Activated CD8-positive, alpha-beta T cell treated with anti-CD3 and anti-CD28 coated beads for 36 hours (primary cell): ENCODE measurements at regions of chr11 and their contacts with region 1.

Region 1: DNA sequence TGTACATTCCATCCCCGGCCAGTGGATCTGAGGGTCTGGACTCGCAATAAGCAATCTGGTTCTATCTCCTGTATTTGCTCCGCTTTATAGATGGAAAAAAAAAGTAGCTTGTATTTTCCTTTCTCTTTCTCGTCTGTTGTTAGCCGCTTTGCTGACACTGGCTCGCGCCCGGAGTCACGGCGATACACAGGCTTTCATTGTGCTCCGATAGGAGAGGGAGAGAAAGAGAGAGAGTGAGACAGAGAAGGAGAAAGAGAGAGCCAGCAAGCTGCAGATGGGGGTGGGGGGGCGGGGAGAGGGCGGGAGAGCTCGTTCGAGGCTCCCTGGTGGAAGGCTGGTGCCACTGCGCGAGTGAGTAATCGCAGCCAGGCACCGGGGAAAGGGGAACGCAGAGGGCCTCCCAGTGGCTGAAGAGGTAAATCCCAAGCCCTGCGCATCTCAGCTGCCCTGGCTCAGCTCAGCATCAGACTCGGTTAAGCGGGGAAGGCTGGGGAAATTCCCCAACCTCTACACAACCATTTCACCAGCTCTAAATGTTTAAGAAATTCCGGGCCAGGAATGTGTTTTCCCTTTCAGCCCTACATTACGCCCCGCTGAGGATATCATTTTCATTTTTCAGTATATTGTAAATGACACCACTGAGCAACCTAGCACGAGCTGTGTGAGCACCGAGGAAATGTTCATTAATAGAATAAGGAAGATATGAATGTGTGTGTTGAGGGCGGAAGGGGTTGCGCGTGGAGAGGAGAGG is at the start of gene MAML2:
- DNase-seq: peak; percentile 96
- ATAC-seq: peak; percentile 84
- H3K4me3 Mint-ChIP-seq: peak within 1 kb of the TSS; percentile 86
- H3K27ac Mint-ChIP-seq: peak within 1 kb of the TSS; percentile 94
- H3K4me1 Mint-ChIP-seq: peaks cover 23% of the 10 kb centered on the region
- H3K27me3 Mint-ChIP-seq: no peaks in the 10 kb centered on the region
- CTCF ChIP-seq: peak; percentile 85
- total RNA-seq, gene MAML2: 11.8 to 12.5 TPM

Region 2: GRCh38 chr11:96012086-96012824 is 330.9 kb before region 1 on chr11:
- CTCF ChIA-PET with region 1: interaction called, 7 read pairs
- POLR2A ChIA-PET with region 1: interaction called, 6 read pairs
- intact Hi-C with region 1: loop called (anchors 5 kb)
- DNase-seq: peak; percentile 61
- ATAC-seq: peak; percentile 56
- H3K4me3 Mint-ChIP-seq: peak overlapping the region; percentile 45
- H3K27ac Mint-ChIP-seq: peak overlapping the region; percentile 90
- H3K4me1 Mint-ChIP-seq: peaks cover 58% of the 10 kb centered on the region
- H3K27me3 Mint-ChIP-seq: no peaks in the 10 kb centered on the region
- CTCF ChIP-seq: peak; percentile 55

Region 3: GRCh38 chr11:96188243-96189006 is 154.7 kb before region 1 on chr11:
- CTCF ChIA-PET with region 1: interaction called, 11 read pairs
- POLR2A ChIA-PET with region 1: interaction called, 12 read pairs
- intact Hi-C with region 1: loop called (anchors 2 kb)
- DNase-seq: peak; percentile 58
- ATAC-seq: peak; percentile 60
- H3K4me3 Mint-ChIP-seq: peak overlapping the region; percentile 43
- H3K27ac Mint-ChIP-seq: peak overlapping the region; percentile 86
- H3K4me1 Mint-ChIP-seq: peaks cover 81% of the 10 kb centered on the region
- H3K27me3 Mint-ChIP-seq: no peaks in the 10 kb centered on the region
- CTCF ChIP-seq: no peak

Region 4: DNA sequence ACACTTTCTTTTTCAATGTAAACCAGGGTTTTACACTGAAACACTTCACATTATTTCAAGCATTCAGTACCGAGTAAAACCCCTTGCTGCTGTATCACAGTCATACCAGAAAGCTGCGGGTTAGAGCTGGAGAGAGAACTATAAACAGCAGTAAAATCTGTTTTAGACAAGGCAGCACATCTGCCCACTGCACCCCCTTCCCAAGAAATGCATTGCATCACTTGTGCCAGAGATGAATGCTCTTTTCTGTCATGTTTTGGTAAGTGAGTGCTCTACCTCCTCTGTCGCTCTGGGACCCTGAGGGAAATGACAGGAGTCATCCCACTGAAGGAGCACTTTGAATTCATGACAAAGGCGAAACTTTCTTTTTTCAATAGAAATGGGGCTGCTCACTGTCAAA is 107.4 kb before region 1 on chr11:
- CTCF ChIA-PET with region 1: interaction called, 132 read pairs
- POLR2A ChIA-PET with region 1: interaction called, 11 read pairs
- intact Hi-C with region 1: no loop called
- DNase-seq: peak; percentile 83
- ATAC-seq: peak; percentile 98
- H3K4me3 Mint-ChIP-seq: peak overlapping the region; percentile 52
- H3K27ac Mint-ChIP-seq: peak overlapping the region; percentile 90
- H3K4me1 Mint-ChIP-seq: peaks cover 22% of the 10 kb centered on the region
- H3K27me3 Mint-ChIP-seq: no peaks in the 10 kb centered on the region
- CTCF ChIP-seq: no peak

Region 5: DNA sequence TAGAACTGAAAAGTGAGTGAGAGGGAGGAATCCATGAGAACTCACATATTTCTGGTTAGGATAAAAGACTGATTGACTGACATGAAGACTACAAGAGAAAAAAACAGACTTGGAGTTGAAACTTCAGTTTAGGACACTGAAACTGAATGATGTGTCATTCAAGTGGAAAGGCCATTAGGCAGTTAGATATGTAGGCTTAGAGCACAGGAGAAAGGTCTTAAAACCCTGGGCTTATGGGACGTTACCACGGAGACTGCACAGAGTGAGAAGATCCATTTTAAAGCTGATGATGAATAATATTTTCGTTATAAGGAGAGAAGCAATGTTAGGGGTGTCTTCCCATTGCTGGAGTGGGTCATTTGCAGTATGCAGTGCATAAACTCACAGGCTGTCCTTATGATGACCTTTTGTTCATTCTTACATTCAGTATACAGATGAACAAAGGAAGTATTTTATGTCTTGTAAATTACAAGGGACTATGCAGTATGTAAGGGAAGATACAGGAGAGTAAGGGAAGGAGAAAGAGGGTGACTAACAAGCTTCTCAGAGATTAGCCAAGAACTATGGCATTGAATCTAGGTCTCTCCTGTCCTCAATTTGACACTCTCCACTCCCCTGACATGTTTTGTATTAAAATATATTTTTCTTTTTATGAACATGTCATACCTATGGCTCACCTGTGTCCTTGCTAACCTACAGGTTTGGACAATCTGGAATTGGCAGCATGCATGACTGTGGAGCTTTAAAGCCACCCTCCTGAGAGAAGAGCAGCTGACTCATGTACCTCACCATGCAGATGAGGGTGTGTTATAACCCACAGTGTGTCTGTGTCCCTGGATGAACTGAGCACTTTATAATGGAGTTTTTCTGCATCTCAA is 63.9 kb before region 1 on chr11:
- CTCF ChIA-PET with region 1: interaction called, 43 read pairs
- POLR2A ChIA-PET with region 1: interaction called, 5 read pairs
- intact Hi-C with region 1: no loop called
- DNase-seq: peak; percentile 21
- ATAC-seq: peak; percentile 81
- H3K4me3 Mint-ChIP-seq: peak overlapping the region; percentile 3
- H3K27ac Mint-ChIP-seq: peak overlapping the region; percentile 62
- H3K4me1 Mint-ChIP-seq: peaks cover 69% of the 10 kb centered on the region
- H3K27me3 Mint-ChIP-seq: no peaks in the 10 kb centered on the region
- CTCF ChIP-seq: no peak

Region 6: DNA sequence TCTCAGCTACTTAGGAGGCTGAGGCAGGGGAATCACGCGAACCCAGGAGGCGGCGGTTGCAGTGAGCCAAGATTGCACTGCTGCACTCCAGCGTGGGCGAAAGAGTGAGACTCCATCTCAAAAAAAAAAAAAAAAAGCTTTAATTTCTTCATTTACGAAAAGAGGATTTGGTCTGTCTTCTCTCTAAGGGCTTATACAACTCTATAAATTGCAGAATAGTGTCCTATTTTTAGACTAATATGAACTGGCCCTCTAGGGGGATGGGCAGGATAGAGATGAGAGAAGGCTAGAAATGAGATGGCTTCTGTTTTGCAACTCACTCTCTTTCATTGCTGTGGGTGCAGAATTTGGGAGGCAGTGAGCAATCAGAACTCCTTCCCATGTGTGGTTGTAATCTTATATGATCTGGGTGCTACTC is 11.4 kb before region 1 on chr11:
- CTCF ChIA-PET with region 1: interaction called, 26 read pairs
- POLR2A ChIA-PET with region 1: interaction called, 4 read pairs
- intact Hi-C with region 1: no loop called
- DNase-seq: no peak
- ATAC-seq: no peak
- H3K4me3 Mint-ChIP-seq: no peak overlapping the region
- H3K27ac Mint-ChIP-seq: peak overlapping the region; percentile 57
- H3K4me1 Mint-ChIP-seq: peaks cover 76% of the 10 kb centered on the region
- H3K27me3 Mint-ChIP-seq: no peaks in the 10 kb centered on the region
- CTCF ChIP-seq: no peak